Activated naive CD4-positive, alpha-beta T cell treated with anti-CD3 and anti-CD28 coated beads for 36 hours (primary cell): ENCODE measurements at regions of chr5 and their contacts with region 1.

Region 1: DNA sequence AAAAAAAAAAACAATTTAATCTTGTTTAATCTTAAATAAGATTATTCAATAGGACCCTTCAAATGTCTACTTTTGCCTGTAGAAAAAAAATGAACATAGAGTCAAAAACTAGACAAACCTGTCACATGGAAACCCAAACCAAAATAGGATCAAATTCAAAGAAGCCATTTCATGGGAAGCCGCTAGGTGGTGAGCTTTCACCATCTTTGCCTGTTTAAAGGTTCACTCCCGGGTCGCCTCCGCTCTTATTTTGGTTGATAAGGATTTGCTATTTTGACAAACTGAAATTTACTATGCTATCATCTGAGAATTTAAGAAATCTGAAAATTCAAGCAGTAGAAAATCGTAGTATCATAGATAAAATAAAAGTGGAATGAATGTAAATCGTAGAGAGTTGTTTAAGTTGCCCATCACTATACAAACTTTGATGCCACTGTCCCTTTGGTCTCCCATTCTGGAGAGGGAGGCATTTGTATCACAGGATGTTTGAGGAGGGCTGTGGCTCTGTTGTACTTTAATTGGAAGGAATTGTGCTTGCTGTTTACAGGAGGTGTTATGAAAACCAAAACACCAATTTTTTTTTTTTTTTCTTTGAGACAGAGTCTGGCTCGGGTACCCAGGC is 43.5 kb upstream of the DNAH5 start:
- DNase-seq: peak; percentile 55
- H3K4me3 Mint-ChIP-seq: no peak overlapping the region
- H3K27ac Mint-ChIP-seq: no peak overlapping the region
- H3K4me1 Mint-ChIP-seq: no peaks in the 10 kb centered on the region
- H3K27me3 Mint-ChIP-seq: no peaks in the 10 kb centered on the region

Region 2: DNA sequence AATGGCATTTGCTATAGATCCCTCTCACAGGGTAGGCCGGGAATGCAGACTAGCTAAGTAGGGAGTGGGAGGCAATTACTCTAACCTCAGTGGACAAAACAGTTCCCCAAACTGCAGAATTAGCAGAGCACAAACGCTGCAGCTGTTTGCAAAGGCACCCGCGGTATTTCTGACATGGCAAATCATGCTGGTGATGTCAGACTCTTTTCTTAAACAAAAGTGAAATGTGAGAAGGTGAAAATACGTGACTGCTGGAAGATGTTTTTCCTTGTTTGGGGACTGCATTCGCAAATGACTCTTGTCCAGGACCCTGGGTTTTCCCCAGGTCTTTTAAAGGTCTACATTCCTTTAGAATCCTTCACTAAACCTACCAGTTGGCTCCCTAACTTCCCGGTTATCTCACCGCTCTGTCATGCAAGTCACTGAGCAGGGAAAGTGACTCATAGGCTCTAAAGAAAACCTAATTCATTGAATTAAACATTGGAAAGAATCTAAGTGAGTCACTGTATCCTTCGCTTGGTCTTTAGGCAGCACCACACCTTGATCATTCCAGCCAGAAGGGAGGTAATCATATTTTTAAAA is 48.0 kb after region 1 on chr5:
- CTCF ChIA-PET with region 1: no interaction called
- intact Hi-C with region 1: no loop called
- DNase-seq: no peak
- H3K4me3 Mint-ChIP-seq: no peak overlapping the region
- H3K27ac Mint-ChIP-seq: no peak overlapping the region
- H3K4me1 Mint-ChIP-seq: peaks cover 9% of the 10 kb centered on the region
- H3K27me3 Mint-ChIP-seq: peaks cover 8% of the 10 kb centered on the region

Region 3: DNA sequence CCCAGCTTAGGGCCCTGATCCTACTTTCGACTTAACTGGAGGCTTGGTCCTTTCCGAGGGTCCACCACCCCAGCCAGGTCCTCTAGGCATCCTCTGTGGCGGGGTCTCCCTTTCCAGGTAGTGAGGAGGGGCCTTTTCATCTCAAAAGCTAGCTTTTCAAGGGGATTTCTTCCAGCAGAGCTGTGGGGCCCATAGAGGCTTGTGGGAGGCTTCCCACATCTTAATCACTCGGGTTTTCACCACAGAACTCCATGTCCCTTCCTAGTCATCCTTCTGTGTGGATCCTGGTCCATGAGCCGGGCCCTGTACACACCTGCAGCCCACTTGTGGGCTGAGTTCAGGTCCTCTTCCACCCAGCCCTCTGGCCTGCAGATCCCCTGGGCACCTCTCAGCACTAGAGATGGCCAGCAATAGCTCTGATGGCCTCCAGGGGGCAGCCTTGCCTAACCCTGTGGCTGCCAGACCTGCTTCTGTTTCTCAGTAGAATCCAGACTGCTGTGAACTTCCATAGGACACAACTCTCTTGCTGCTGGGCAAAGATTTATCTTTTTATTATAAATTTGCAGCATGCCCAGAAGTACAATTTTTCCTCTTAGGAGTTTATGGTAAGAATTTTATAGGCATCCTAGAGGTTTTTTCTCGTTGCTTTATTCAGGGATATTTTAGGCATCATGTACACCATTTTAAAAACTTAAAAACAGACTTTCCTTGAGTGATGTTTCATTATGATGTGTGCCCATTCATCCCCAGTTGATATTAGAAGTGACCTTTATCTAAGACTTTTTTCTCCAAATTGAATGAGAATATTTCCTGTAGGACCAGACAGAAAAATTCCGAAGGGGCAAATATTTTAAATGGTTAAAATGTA is 364.1 kb after region 1 on chr5:
- CTCF ChIA-PET with region 1: no interaction called
- intact Hi-C with region 1: loop called (anchors 5 kb)
- DNase-seq: peak; percentile 68
- H3K4me3 Mint-ChIP-seq: no peak overlapping the region
- H3K27ac Mint-ChIP-seq: no peak overlapping the region
- H3K4me1 Mint-ChIP-seq: no peaks in the 10 kb centered on the region
- H3K27me3 Mint-ChIP-seq: no peaks in the 10 kb centered on the region